CD4-positive, alpha-beta memory T cell (primary cell): ENCODE measurements at regions of chr1 and their contacts with region 1.

Region 1: GRCh38 chr1:150186789-150187559 is 37.3 kb downstream of the PLEKHO1 start:
- DNase-seq: peak; percentile 42 to 71 (median 65)
- H3K4me3 ChIP-seq: no peak overlapping the region
- H3K4me3 Mint-ChIP-seq: peak overlapping the region in 7 of 8 donors; percentile 1 to 65 (median 44)
- H3K27ac ChIP-seq: no peak overlapping the region
- H3K27ac Mint-ChIP-seq: peak overlapping the region in 4 of 7 donors; percentile 19 to 85 (median 70)
- H3K4me1 ChIP-seq: peaks cover 8% of the 10 kb centered on the region
- H3K4me1 Mint-ChIP-seq: peaks cover 5 to 13% (median 8%) of the 10 kb centered on the region in 4 donors
- H3K27me3 ChIP-seq: no peaks in the 10 kb centered on the region
- H3K27me3 Mint-ChIP-seq: no peaks in the 10 kb centered on the region

Region 2: DNA sequence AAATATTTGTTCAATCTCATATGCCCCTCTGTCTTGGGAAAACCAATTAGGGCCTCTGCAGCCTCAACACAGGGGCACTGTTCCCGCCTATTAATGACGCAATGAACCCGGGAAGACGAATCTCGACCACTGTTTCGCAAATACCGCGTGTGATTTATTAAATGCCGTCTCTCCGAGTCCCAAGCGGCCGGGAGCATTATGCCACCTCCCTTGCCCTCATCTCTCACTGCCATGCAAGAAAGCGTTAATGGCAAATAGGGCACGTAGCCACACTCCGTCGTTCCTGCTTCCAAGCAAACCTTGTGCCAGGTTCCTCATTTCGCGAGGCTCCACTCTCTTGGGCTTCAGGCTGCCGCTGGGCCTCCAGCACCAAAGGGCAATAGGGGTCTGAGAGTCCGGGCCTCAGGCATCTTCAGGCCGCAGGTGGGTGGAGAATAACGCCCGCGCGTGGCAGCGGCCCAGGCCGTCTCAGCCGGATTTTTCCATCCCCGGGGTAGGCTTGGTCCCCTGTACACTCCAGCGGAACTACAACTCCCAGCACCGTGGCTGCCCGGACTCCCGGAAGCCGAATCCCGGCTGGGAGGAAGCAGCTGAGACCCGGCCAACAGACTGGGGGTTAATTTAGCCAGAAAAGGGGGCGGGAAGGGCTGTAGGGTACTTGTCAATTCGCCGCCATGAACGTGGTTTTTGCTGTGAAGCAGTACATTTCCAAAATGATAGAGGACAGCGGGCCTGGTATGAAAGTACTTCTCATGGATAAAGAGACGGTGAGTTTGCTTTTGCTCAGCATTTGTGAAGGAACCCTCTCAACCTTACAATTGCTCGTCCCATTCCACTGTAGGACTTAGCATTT is 119.6 kb before region 1 on chr1 and contains the start of gene VPS45:
- CTCF ChIA-PET with region 1: interaction called, 161 read pairs
- POLR2A ChIA-PET with region 1: interaction called, 13 read pairs
- intact Hi-C with region 1: no loop called
- DNase-seq: peak; percentile 69 to 82 (median 75)
- H3K4me3 ChIP-seq: peak within 1 kb of the TSS; percentile 70 to 88
- H3K4me3 Mint-ChIP-seq: peak within 1 kb of the TSS; percentile 91 to 98 (median 96)
- H3K27ac ChIP-seq: peak within 1 kb of the TSS; percentile 65
- H3K27ac Mint-ChIP-seq: peak within 1 kb of the TSS; percentile 91 to 97 (median 94)
- H3K4me1 ChIP-seq: peaks cover 30% of the 10 kb centered on the region
- H3K4me1 Mint-ChIP-seq: peaks cover 27 to 42% (median 35%) of the 10 kb centered on the region in 4 donors
- H3K27me3 ChIP-seq: no peaks in the 10 kb centered on the region
- H3K27me3 Mint-ChIP-seq: no peaks in the 10 kb centered on the region
- total RNA-seq, gene VPS45: 32.1 to 38.5 TPM

Region 3: GRCh38 chr1:150072959-150073358 is 114.0 kb before region 1 on chr1:
- CTCF ChIA-PET with region 1: interaction called, 161 read pairs
- POLR2A ChIA-PET with region 1: interaction called, 13 read pairs
- intact Hi-C with region 1: loop called (anchors 1 kb)
- DNase-seq: peak in 4 of 5 donors; percentile 45 to 59 (median 50)
- H3K4me3 ChIP-seq: no peak overlapping the region
- H3K4me3 Mint-ChIP-seq: no peak overlapping the region
- H3K27ac ChIP-seq: no peak overlapping the region
- H3K27ac Mint-ChIP-seq: peak overlapping the region in 4 of 7 donors; percentile 1 to 76 (median 66)
- H3K4me1 ChIP-seq: peaks cover 29% of the 10 kb centered on the region
- H3K4me1 Mint-ChIP-seq: peaks cover 35 to 47% (median 40%) of the 10 kb centered on the region in 4 donors
- H3K27me3 ChIP-seq: no peaks in the 10 kb centered on the region
- H3K27me3 Mint-ChIP-seq: no peaks in the 10 kb centered on the region

Region 4: DNA sequence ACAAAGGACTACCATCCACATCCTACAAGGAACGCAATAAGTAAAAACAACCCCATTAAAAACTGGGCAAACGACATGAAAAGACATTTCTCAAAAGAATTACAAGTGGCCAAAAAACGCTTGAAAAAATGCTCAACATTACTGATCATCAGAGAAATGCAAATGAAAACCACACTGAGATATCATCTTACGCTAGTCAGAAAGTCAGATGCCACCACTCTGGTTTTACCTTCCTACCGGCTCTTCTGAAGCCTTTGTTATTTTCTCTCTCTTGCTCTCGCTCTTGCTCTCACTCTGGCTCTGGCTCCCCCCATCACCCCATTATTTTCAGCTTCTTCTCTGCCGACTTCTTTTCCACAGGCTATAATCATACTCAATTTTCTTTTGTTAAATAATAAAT is 80.6 kb before region 1 on chr1:
- CTCF ChIA-PET with region 1: interaction called, 11 read pairs
- POLR2A ChIA-PET with region 1: no interaction called
- intact Hi-C with region 1: no loop called
- DNase-seq: peak; percentile 58 to 72 (median 66)
- H3K4me3 ChIP-seq: no peak overlapping the region
- H3K4me3 Mint-ChIP-seq: peak overlapping the region; percentile 71 to 90 (median 86)
- H3K27ac ChIP-seq: peak overlapping the region; percentile 25
- H3K27ac Mint-ChIP-seq: peak overlapping the region; percentile 92 to 98 (median 94)
- H3K4me1 ChIP-seq: peaks cover 83% of the 10 kb centered on the region
- H3K4me1 Mint-ChIP-seq: peaks cover 64 to 92% (median 75%) of the 10 kb centered on the region in 4 donors
- H3K27me3 ChIP-seq: no peaks in the 10 kb centered on the region
- H3K27me3 Mint-ChIP-seq: no peaks in the 10 kb centered on the region

Region 5: DNA sequence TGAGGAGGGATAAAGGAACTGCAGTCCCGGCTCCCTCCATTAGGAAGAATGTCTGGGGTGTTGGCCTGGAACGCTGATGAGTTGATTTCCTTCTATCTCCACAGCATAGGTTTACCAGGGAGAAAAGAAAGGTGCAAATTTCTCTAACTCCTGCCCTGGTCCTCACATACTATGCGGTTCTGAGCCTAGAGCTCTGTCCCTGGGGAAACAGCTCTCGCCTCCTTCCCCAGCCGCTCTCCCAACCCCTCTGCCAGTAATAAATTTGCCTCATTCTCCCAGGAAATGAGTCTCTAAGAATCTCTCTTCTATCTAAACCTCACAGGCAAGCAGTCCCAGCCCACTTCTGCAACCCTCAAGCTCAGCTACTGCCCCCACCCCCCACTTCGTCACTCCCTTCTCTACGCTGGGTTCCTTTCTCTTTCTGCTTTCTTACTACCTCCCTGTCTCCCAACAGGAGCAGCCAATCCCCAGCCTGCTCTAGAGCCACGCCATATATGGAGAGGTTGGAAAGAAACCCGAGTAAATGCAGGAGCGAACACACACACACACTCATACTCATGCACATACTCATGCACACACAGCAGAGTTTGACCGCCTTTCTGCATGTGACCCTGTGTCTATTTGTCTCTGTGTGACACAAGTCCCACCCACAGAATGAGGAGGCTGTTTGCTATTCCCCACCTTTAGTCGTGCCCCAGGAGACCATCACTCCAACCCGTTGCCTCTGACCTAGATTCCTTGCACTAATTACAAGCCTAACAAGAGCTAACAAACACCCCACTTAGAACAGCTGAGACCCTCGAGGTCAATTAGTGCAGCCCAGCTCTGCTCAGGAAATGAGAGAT is 23.9 kb before region 1 on chr1:
- CTCF ChIA-PET with region 1: interaction called, 33 read pairs
- POLR2A ChIA-PET with region 1: interaction called, 4 read pairs
- intact Hi-C with region 1: loop called (anchors 2 kb)
- DNase-seq: no peak
- H3K4me3 ChIP-seq: no peak overlapping the region
- H3K4me3 Mint-ChIP-seq: peak overlapping the region in 5 of 8 donors; percentile 0 to 61 (median 34)
- H3K27ac ChIP-seq: no peak overlapping the region
- H3K27ac Mint-ChIP-seq: peak overlapping the region in 5 of 7 donors; percentile 34 to 83 (median 53)
- H3K4me1 ChIP-seq: peaks cover 40% of the 10 kb centered on the region
- H3K4me1 Mint-ChIP-seq: peaks cover 34 to 52% (median 42%) of the 10 kb centered on the region in 4 donors
- H3K27me3 ChIP-seq: no peaks in the 10 kb centered on the region
- H3K27me3 Mint-ChIP-seq: no peaks in the 10 kb centered on the region

Region 6: GRCh38 chr1:150168960-150169601 is 17.9 kb before region 1 on chr1:
- CTCF ChIA-PET with region 1: interaction called, 33 read pairs
- POLR2A ChIA-PET with region 1: interaction called, 3 read pairs
- intact Hi-C with region 1: loop called (anchors 2 kb)
- DNase-seq: peak; percentile 28 to 52 (median 38)
- H3K4me3 ChIP-seq: no peak overlapping the region
- H3K4me3 Mint-ChIP-seq: no peak overlapping the region
- H3K27ac ChIP-seq: no peak overlapping the region
- H3K27ac Mint-ChIP-seq: no peak overlapping the region
- H3K4me1 ChIP-seq: no peaks in the 10 kb centered on the region
- H3K4me1 Mint-ChIP-seq: peaks cover 0 to 7% (median 2%) of the 10 kb centered on the region in 4 donors
- H3K27me3 ChIP-seq: no peaks in the 10 kb centered on the region
- H3K27me3 Mint-ChIP-seq: no peaks in the 10 kb centered on the region

Region 7: DNA sequence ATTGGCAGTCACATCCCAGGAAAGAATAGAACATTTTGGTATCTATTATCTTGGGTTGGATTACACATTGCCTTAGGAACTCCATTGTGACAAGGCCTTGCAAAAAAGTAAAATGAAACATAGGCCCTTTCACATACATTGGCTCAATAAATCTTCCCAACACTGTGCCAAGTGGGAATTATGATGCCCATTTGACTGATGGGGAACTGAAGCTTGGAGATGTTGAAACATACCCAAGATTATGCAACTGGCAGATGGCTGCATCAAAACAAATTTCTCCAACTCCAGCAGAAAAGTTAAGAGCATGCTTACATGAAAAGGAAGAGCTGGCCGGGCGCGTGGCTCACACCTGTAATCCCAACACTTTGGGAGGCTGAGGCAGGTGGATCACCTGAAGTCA is 10.4 kb before region 1 on chr1:
- CTCF ChIA-PET with region 1: interaction called, 21 read pairs
- POLR2A ChIA-PET with region 1: no interaction called
- intact Hi-C with region 1: no loop called
- DNase-seq: no peak
- H3K4me3 ChIP-seq: no peak overlapping the region
- H3K4me3 Mint-ChIP-seq: no peak overlapping the region
- H3K27ac ChIP-seq: no peak overlapping the region
- H3K27ac Mint-ChIP-seq: no peak overlapping the region
- H3K4me1 ChIP-seq: no peaks in the 10 kb centered on the region
- H3K4me1 Mint-ChIP-seq: no peaks in the 10 kb centered on the region
- H3K27me3 ChIP-seq: no peaks in the 10 kb centered on the region
- H3K27me3 Mint-ChIP-seq: no peaks in the 10 kb centered on the region

Region 8: DNA sequence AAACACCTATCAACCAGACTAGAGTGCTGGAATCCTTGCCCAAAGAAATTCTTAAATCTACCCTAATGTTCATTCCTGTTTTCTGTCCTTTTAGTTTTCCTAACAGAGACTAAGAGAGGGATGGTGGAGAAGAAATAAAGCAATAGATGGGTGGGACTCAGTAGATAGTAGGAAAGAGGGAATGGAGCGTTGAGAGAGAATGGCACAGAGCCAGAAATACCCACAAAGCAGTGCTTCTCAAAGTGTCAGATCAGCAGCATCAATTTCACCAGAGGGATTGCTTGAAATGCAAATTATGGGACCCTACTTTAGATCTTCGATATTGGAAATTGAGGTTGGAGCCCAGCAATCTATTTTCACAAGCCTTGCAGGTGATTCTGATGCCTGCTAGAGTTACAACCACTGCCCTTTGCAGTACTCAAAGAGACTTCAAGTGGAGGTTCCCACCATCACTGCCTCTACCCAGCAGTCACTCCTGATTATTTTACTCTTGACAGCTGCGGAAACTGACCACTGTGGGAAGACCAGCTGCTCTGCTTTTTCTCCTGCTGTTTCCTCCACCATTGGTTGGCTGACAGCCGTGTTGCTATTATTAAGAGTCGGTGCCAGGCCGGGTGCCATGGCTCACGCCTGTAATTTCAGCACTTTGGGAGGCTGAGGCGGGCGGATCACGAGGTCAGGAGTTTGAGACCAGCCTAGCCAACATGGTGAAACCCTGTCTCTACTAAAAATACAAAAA is 123.0 kb after region 1 on chr1:
- CTCF ChIA-PET with region 1: no interaction called
- POLR2A ChIA-PET with region 1: no interaction called
- intact Hi-C with region 1: no loop called
- DNase-seq: no peak
- H3K4me3 ChIP-seq: no peak overlapping the region
- H3K4me3 Mint-ChIP-seq: no peak overlapping the region
- H3K27ac ChIP-seq: no peak overlapping the region
- H3K27ac Mint-ChIP-seq: peak overlapping the region in 1 of 7 donors; percentile 4
- H3K4me1 ChIP-seq: no peaks in the 10 kb centered on the region
- H3K4me1 Mint-ChIP-seq: peaks cover 0 to 1% (median 0%) of the 10 kb centered on the region in 4 donors
- H3K27me3 ChIP-seq: no peaks in the 10 kb centered on the region
- H3K27me3 Mint-ChIP-seq: no peaks in the 10 kb centered on the region